H1 (cell line): ENCODE measurements at regions of chr17 and their contacts with region 1.

Region 1: GRCh38 chr17:67353929-67354574 is 12.3 kb downstream of the PSMD12 start:
- DNase-seq: no peak
- H3K4me3 ChIP-seq: no peak overlapping the region
- H3K27ac ChIP-seq: no peak overlapping the region
- H3K4me1 ChIP-seq: peaks cover 0 to 7% (median 3%) of the 10 kb centered on the region in 4 experiments; a peak in 1 of 7 replicates
- H3K27me3 ChIP-seq: no peaks in the 10 kb centered on the region
- CTCF ChIP-seq: no peak
- EP300 ChIP-seq: no peak
- POLR2A ChIP-seq: no peak
- RAD21 ChIP-seq: no peak

Region 2: DNA sequence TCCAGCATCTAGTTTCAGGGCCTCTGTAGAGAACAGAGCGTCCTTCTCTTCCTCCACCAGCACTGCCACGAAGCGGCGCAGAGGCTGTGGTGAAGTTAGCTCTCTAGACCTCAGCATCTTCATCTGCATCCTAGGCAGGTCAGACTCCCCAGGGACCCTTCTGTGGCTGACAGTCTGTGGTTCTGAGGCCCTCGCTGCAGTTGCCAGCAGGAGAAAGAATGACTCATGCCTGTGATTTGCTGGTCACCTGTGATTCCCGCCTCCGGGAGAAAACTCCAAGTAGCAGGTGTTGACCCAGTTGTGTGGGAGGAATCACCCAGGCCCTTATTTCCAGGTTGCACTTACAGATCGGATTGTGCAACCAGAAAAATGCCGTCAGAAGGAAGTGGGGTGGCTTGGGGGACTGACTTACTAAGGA is 636.4 kb before region 1 on chr17:
- CTCF ChIA-PET with region 1: no interaction called
- POLR2A ChIA-PET with region 1: no interaction called
- DNase-seq: no peak
- H3K4me3 ChIP-seq: no peak overlapping the region
- H3K27ac ChIP-seq: no peak overlapping the region
- H3K4me1 ChIP-seq: peaks cover 9 to 29% (median 13%) of the 10 kb centered on the region in 4 experiments
- H3K27me3 ChIP-seq: no peaks in the 10 kb centered on the region
- CTCF ChIP-seq: no peak
- EP300 ChIP-seq: no peak
- POLR2A ChIP-seq: no peak
- RAD21 ChIP-seq: no peak

Region 3: GRCh38 chr17:67211742-67212141 is 142.3 kb before region 1 on chr17:
- CTCF ChIA-PET with region 1: no interaction called
- POLR2A ChIA-PET with region 1: no interaction called
- DNase-seq: no peak
- H3K4me3 ChIP-seq: no peak overlapping the region
- H3K27ac ChIP-seq: no peak overlapping the region
- H3K4me1 ChIP-seq: no peaks in the 10 kb centered on the region
- H3K27me3 ChIP-seq: no peaks in the 10 kb centered on the region
- CTCF ChIP-seq: no peak
- EP300 ChIP-seq: no peak
- POLR2A ChIP-seq: no peak
- RAD21 ChIP-seq: no peak

Region 4: DNA sequence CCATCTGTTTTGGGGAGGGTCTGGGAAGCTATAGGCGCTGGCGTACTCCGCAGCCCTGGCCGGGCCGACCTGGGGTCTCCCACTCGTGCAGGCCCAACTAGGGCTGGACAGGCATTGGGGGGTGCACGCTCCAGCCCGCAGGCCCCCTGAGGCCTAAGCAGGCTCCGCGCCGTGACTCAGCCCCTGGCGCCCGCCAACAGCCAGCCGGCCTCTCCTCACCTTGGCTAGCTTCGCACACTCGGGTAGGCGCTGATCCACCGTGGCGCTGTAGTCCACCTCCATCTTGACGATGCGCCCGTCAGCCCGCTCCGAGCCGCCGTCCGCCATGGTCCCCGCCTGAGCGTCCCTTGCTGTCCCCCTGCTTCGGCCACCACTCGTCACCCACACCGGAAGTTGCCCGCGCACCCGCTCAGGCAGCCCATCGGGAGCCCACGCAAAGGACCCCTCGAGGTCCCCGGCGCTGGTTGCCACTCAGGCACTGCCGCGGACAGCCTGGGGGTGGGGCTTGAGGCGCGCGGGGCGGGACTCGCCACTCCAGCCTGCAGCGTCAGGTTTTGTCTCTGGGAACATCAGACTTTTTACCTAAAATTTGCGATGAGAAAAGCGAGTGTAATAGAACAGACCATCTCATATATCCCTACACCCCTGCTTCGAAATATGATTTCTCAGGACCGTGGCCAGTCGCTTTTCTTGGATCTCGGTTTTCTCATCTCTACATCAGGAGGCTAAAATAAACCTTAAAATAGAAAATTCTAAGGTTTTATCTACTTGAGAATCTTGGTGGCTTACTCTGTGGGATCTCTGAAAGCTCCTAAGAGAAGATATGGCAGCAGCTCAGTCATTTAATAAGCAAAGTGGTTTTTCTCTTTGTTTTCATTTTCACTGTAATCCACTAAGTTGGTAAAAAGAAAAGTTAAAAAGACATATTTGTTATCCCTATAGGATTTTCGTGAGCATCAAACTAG is 12.4 kb after region 1 on chr17 and contains the start of gene PSMD12:
- CTCF ChIA-PET with region 1: interaction called, 4 read pairs
- POLR2A ChIA-PET with region 1: interaction called, 17 read pairs
- DNase-seq: peak in 1 of 2 experiments; percentile 97
- H3K4me3 ChIP-seq: peak within 1 kb of the TSS; percentile 86 to 99 (median 98)
- H3K27ac ChIP-seq: peak within 1 kb of the TSS; percentile 94
- H3K4me1 ChIP-seq: peaks cover 0 to 5% (median 4%) of the 10 kb centered on the region in 4 experiments; a peak in 4 of 7 replicates
- H3K27me3 ChIP-seq: no peaks in the 10 kb centered on the region
- CTCF ChIP-seq: no peak
- EP300 ChIP-seq: no peak
- POLR2A ChIP-seq: peak; percentile 78 to 93
- RAD21 ChIP-seq: no peak
- total RNA-seq, gene PSMD12: 73.2 and 82.4 TPM in 2 replicates